A549 (cell line): ENCODE measurements at regions of chr5 and their contacts with region 1.

Region 1: GRCh38 chr5:14644623-14645237 is 19.8 kb upstream of the OTULIN start:
- DNase-seq: no peak
- ATAC-seq: no peak
- H3K4me3 ChIP-seq: no peak overlapping the region
- H3K27ac ChIP-seq: no peak overlapping the region
- H3K4me1 ChIP-seq: no peaks in the 10 kb centered on the region
- CTCF ChIP-seq: no peak
- EP300 ChIP-seq: no peak
- POLR2A ChIP-seq: no peak
- RAD21 ChIP-seq: no peak

Region 2: DNA sequence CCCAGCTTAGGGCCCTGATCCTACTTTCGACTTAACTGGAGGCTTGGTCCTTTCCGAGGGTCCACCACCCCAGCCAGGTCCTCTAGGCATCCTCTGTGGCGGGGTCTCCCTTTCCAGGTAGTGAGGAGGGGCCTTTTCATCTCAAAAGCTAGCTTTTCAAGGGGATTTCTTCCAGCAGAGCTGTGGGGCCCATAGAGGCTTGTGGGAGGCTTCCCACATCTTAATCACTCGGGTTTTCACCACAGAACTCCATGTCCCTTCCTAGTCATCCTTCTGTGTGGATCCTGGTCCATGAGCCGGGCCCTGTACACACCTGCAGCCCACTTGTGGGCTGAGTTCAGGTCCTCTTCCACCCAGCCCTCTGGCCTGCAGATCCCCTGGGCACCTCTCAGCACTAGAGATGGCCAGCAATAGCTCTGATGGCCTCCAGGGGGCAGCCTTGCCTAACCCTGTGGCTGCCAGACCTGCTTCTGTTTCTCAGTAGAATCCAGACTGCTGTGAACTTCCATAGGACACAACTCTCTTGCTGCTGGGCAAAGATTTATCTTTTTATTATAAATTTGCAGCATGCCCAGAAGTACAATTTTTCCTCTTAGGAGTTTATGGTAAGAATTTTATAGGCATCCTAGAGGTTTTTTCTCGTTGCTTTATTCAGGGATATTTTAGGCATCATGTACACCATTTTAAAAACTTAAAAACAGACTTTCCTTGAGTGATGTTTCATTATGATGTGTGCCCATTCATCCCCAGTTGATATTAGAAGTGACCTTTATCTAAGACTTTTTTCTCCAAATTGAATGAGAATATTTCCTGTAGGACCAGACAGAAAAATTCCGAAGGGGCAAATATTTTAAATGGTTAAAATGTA is 292.7 kb before region 1 on chr5:
- CTCF ChIA-PET with region 1: interaction called, 20 read pairs
- POLR2A ChIA-PET with region 1: no interaction called
- DNase-seq: peak; percentile 61 to 74
- ATAC-seq: peak; percentile 97
- H3K4me3 ChIP-seq: no peak overlapping the region
- H3K27ac ChIP-seq: no peak overlapping the region
- H3K4me1 ChIP-seq: no peaks in the 10 kb centered on the region
- CTCF ChIP-seq: peak; percentile 85
- EP300 ChIP-seq: no peak
- POLR2A ChIP-seq: no peak
- RAD21 ChIP-seq: peak; percentile 51 to 65

Region 3: DNA sequence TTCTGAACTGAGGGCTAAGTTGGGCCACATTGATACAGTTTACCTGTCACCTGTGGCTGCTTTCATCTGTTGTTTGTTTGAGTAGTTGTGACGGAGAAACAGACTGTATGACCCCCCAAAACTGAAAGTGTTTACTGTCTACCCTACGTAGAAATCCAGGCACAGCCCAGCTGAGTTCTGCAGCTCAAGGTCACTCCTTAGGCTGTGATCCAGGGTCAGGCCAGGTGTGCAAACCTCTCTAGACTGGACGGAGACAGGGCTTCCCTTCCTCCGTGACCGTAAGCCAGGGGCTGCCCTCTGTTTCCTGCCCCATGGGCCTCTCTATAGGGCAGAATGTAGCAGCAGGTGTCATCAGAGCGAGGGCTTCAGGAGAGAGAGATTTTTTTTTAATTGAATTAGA is 271.0 kb before region 1 on chr5:
- CTCF ChIA-PET with region 1: interaction called, 14 read pairs
- POLR2A ChIA-PET with region 1: no interaction called
- DNase-seq: no peak
- ATAC-seq: no peak; a peak in 1 of 6 replicates
- H3K4me3 ChIP-seq: no peak overlapping the region
- H3K27ac ChIP-seq: no peak overlapping the region
- H3K4me1 ChIP-seq: no peaks in the 10 kb centered on the region
- CTCF ChIP-seq: no peak
- EP300 ChIP-seq: no peak
- POLR2A ChIP-seq: no peak
- RAD21 ChIP-seq: no peak

Region 4: DNA sequence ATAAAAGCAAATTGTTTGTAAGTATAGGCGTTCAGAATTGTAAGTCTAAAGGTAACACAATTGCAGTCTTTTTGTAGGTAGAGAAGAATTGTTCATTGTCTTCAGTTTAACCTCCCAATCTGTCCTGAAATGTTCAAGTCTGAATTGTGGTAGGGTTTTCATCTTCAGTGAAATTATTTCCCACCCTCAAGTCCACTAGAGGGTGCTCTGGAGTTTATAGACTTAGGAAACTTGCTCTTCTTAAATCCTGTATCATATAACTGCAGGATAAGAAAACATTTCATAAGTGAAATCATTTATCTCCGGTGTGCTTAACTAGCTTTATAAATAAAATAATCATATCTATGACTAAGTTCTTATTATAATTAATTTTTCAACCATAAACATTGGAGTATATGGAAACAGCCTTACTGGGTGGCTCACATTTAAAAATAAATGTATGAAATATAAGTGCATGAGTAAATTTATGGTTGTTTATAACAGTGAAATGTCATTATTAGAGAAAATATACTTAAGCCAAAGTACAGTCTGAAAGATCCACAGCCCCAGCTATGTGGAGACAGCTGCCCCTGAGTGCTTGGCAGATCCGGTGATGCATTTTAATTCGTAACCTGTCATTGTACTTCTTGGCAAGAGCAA is 245.6 kb before region 1 on chr5:
- CTCF ChIA-PET with region 1: interaction called, 43 read pairs
- POLR2A ChIA-PET with region 1: no interaction called
- DNase-seq: peak; percentile 48 to 53
- ATAC-seq: peak in 1 of 2 experiments; percentile 76; a peak in 3 of 6 replicates
- H3K4me3 ChIP-seq: no peak overlapping the region
- H3K27ac ChIP-seq: peak overlapping the region in 1 of 2 experiments; percentile 47; a peak in 1 of 6 replicates
- H3K4me1 ChIP-seq: peaks cover 14% of the 10 kb centered on the region
- CTCF ChIP-seq: peak; percentile 75
- EP300 ChIP-seq: no peak
- POLR2A ChIP-seq: no peak
- RAD21 ChIP-seq: peak; percentile 35 to 48; a peak in 3 of 5 replicates

Region 5: DNA sequence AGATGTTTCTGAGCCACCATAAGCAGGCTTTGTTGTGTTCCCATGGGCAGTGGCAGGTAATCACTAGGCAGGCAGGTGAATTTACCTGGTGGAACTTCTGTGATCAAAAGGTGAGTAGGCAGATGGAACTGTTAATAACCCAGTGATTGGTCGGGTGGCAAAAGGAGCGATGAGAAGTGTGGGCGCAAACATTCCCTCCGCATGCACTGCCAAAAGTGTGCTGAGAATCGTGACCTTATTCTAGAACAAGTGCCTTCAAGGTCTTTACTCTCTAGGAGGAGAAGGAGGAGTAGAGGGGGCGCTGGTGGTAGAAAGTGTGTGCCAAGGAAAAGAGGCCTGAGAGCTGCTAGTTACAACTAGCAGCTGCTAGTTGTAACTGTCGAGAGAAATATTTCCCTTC is 59.9 kb before region 1 on chr5:
- CTCF ChIA-PET with region 1: interaction called, 11 read pairs
- POLR2A ChIA-PET with region 1: no interaction called
- DNase-seq: no peak
- ATAC-seq: no peak
- H3K4me3 ChIP-seq: no peak overlapping the region
- H3K27ac ChIP-seq: no peak overlapping the region; a peak in 1 of 6 replicates
- H3K4me1 ChIP-seq: peaks cover 9% of the 10 kb centered on the region; the same call in 1 of the 3 replicates
- CTCF ChIP-seq: no peak
- EP300 ChIP-seq: no peak
- POLR2A ChIP-seq: no peak
- RAD21 ChIP-seq: no peak

Region 6: GRCh38 chr5:14663734-14664301 is 19.1 kb after region 1 on chr5:
- CTCF ChIA-PET with region 1: interaction called, 32 read pairs
- POLR2A ChIA-PET with region 1: no interaction called
- DNase-seq: no peak
- ATAC-seq: peak; percentile 27 to 59; a peak in 4 of 6 replicates
- H3K4me3 ChIP-seq: peak overlapping the region; percentile 65
- H3K27ac ChIP-seq: peak overlapping the region; percentile 83 to 96
- H3K4me1 ChIP-seq: peaks cover 46% of the 10 kb centered on the region
- CTCF ChIP-seq: no peak
- EP300 ChIP-seq: no peak
- POLR2A ChIP-seq: no peak
- RAD21 ChIP-seq: no peak